Activated CD4-positive, alpha-beta memory T cell treated with anti-CD3 and anti-CD28 coated beads for 36 hours (primary cell): ENCODE measurements at regions of chr13 and their contacts with region 1.

Region 1: GRCh38 chr13:45310341-45311125 is 30.4 kb downstream of the TPT1 start:
- DNase-seq: no peak
- H3K4me3 Mint-ChIP-seq: peak overlapping the region; percentile 69
- H3K27ac Mint-ChIP-seq: no peak overlapping the region
- H3K4me1 Mint-ChIP-seq: peaks cover 17% of the 10 kb centered on the region
- H3K27me3 Mint-ChIP-seq: peaks cover 6% of the 10 kb centered on the region

Region 2: DNA sequence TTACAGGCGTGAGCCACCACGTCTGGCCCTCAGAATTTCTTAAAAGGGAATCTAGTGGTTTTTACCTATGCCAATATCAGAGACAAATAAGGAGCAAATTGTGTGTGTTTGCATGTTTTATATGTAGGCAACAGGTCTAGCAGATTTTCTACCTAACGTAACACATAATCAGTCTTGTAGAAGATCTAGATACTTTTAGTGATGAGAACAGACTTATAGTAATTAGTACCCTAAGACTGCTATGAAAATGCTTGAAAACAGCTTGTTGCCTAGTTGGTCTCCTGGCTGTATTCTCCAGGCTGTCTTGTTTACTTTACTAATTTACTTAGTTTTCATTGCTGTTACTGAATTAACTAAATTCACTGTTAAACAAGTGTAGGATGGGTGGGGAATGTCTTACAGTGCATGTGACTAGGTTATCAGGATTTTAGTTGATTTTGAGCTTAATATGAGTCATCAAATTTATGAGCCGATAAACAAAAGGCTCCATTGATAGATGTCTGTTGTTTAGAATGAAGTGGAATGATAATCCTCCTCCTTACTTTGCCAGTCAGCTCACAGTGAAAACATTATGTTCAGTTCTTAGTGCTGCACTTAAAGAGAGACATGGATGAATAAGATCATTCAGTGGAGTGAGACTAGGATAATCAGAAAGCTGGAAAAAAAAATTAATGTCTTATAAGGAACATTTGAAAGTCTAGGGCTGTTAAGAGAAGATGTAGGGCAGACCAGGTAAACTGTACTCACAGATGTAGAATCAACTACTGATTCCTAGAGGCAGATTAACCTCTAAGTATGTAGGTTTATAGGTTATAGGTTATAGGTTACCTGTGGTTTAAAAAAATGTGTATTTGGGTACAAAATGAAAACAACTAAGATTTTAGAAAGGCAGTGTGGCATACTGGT is 167.8 kb before region 1 on chr13:
- CTCF ChIA-PET with region 1: no interaction called
- POLR2A ChIA-PET with region 1: no interaction called
- intact Hi-C with region 1: no loop called
- DNase-seq: no peak
- H3K4me3 Mint-ChIP-seq: no peak overlapping the region
- H3K27ac Mint-ChIP-seq: no peak overlapping the region
- H3K4me1 Mint-ChIP-seq: peaks cover 8% of the 10 kb centered on the region
- H3K27me3 Mint-ChIP-seq: no peaks in the 10 kb centered on the region

Region 3: DNA sequence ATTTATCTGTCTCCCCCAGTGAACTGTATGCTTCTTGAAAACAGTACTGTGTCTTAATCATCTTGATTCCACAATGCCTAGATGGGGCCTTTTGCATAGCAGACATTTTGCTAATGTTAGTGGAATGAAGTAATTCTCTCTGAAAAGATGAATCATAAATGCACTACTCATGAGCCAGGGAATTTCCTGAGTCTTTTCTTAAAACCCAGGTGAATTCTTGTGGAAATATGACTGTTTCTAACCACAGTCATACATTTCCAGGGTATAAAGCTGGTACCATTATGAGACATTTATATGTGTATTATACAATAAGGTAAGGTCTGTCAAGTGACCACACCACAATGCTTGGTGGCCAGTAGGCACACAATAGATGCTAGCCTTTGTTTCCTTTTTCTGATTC is 104.2 kb before region 1 on chr13:
- CTCF ChIA-PET with region 1: no interaction called
- POLR2A ChIA-PET with region 1: no interaction called
- intact Hi-C with region 1: loop called (anchors 5 kb)
- DNase-seq: peak; percentile 34
- H3K4me3 Mint-ChIP-seq: no peak overlapping the region
- H3K27ac Mint-ChIP-seq: no peak overlapping the region
- H3K4me1 Mint-ChIP-seq: peaks cover 23% of the 10 kb centered on the region
- H3K27me3 Mint-ChIP-seq: no peaks in the 10 kb centered on the region

Region 4: DNA sequence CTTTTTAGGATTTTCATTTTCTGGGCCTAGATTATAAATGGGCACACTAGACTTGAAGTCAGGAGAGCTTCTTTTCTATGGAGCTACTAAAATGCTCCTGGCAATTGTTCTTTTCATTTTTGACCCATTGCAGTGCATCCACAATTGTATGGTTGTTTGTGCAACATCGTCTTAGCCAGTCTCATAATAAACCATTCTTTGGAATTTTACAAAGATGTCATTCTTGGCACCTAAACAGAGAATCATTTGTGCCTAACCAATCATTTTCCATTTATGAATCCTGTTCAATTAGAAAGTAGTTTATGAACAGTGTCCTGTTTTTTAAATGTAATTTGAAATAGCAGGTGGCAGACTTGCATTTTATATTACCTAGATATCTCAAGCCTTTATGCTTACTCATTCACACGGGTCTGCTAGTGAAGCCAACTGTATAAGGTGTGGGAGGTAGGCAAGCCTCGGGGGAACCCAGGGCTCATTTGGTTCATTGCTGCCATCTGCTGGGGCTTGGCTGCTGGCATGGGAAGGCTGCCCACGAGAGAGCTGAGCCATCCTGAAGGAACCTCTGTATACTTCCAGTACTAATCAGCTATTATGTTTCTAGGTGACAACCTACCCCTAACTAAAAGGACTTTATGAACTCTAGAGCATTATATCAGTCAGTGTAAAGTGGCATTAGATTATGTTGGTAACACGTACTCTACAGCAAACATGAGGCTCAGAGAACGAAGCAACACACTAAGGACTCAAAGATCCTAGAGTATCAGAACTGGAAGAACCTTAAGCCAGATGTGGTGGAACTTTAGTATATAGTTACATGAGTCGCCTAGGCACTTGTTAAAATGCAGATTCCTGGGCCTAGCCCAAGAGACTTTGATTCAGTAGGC is 29.5 kb before region 1 on chr13:
- CTCF ChIA-PET with region 1: interaction called, 8 read pairs
- POLR2A ChIA-PET with region 1: no interaction called
- intact Hi-C with region 1: loop called (anchors 1 kb)
- DNase-seq: peak; percentile 75
- H3K4me3 Mint-ChIP-seq: no peak overlapping the region
- H3K27ac Mint-ChIP-seq: no peak overlapping the region
- H3K4me1 Mint-ChIP-seq: no peaks in the 10 kb centered on the region
- H3K27me3 Mint-ChIP-seq: no peaks in the 10 kb centered on the region

Region 5: DNA sequence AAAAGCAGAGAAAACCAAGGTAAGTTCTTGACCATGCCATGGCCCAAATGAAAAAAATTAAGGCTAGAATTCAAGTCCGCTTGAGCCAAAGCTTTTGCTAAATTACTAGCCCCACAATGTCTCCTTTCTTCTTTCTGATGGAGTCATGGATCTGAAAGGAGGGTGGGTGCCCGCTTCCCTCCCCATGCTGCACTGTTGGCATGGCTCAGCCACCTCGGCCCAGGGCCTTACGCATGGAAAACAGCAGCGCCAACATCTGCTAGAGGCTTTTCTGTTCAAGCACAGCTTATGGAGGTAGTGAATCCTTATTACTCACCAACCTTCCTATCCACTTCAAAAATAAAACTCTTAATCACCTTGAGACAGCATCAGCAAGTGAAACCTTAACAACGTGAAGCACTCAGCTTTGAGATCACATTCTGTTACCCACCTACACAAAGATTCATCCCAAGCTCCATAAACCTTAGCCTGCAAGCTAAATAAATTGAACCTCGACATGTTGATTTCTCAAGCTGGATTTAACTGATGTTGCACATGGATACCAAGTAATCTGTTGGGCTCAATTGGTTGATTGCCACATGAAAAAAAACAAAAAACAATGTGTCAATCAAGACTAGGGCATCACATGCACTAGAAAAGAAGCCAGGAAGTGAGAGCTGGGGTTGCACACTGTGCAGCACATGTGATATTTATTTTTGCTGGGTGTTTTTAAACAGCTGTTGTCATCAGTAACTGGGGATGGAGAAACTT is 12.9 kb before region 1 on chr13:
- CTCF ChIA-PET with region 1: interaction called, 15 read pairs
- POLR2A ChIA-PET with region 1: no interaction called
- intact Hi-C with region 1: loop called (anchors 1 kb)
- DNase-seq: peak; percentile 45
- H3K4me3 Mint-ChIP-seq: no peak overlapping the region
- H3K27ac Mint-ChIP-seq: peak overlapping the region; percentile 46
- H3K4me1 Mint-ChIP-seq: peaks cover 37% of the 10 kb centered on the region
- H3K27me3 Mint-ChIP-seq: peaks cover 5% of the 10 kb centered on the region